Adrenal gland (tissue), 19 donors: ENCODE measurements at regions of chr17 and their contacts with region 1.

Region 1: GRCh38 chr17:3012926-3013581 is 50.4 kb downstream of the OR1D5 start:
- DNase-seq: peak; percentile 62 to 84 (median 74)
- H3K4me3 ChIP-seq: no peak overlapping the region
- H3K27ac ChIP-seq: no peak overlapping the region
- H3K4me1 ChIP-seq: no peaks in the 10 kb centered on the region
- H3K27me3 ChIP-seq: no peaks in the 10 kb centered on the region
- CTCF ChIP-seq: peak; percentile 58 to 93 (median 82)
- POLR2A ChIP-seq: no peak

Region 2: DNA sequence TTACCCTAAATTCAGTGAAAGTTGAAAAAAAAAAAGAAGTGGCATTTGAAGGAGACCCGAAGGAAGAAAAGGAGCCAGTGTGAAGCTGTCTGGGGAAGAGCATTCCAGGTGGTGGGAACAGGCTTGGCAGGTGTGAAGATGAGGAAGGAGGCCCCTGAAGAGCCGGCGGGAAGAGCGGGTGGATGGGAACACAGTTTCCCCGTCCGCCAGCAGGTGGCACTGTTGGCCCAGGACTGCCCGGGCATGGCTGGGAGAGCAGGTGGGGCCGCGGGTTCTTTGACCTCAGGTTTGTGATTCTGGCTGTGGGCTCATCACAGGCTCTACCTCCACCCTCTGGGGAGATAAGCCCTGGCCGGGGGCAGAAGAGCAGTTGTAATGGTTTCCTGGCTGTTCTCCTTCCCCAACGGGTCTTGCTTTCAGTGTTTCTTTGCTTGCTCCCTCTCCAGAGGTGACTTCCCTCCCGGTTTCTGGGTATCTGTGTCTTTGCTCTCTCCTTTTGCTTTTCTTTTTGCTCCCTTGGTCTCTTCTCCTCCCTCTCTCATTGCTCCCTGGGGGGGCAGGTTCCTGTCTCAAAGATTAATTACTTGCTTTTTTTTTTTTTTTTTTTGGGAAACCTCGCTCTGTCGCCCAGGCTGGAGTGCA is 184.5 kb before region 1 on chr17:
- intact Hi-C with region 1: loop called in 1 of 2 experiments (anchors 2 kb)
- DNase-seq: peak; percentile 64 to 82 (median 74)
- H3K4me3 ChIP-seq: no peak overlapping the region
- H3K27ac ChIP-seq: no peak overlapping the region
- H3K4me1 ChIP-seq: no peaks in the 10 kb centered on the region
- H3K27me3 ChIP-seq: no peaks in the 10 kb centered on the region
- CTCF ChIP-seq: peak; percentile 81 to 91 (median 90)
- POLR2A ChIP-seq: no peak

Region 3: DNA sequence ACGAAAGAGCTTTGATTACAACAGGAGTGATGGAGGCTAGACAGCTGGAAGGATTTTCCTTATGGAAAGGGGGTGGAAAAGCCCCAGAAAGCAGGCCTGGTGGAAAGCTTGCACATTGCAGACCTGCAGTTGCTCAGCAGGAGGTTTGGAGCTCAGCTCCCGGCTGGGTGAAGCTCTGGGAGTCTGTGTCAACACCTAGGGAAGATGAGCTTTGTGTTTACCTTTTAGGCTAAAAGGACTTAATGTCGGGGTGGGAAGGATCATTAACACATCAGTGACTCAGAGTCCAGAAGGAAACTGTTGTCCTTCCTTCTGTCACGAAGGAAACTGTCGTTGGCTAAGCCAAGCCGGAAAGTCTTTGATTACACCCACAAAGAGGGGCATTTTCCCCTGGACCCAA is 168.6 kb before region 1 on chr17:
- intact Hi-C with region 1: loop called in 1 of 2 experiments (anchors 10 kb)
- DNase-seq: no peak
- H3K4me3 ChIP-seq: no peak overlapping the region
- H3K27ac ChIP-seq: no peak overlapping the region
- H3K4me1 ChIP-seq: peaks cover 0 to 4% of the 10 kb centered on the region in 2 donors
- H3K27me3 ChIP-seq: peaks cover 13% of the 10 kb centered on the region
- CTCF ChIP-seq: no peak
- POLR2A ChIP-seq: no peak

Region 4: GRCh38 chr17:2853111-2853721 is 159.8 kb before region 1 on chr17:
- intact Hi-C with region 1: loop called (anchors 5 to 10 kb)
- DNase-seq: peak in 5 of 7 donors; percentile 15 to 62 (median 32)
- H3K4me3 ChIP-seq: peak overlapping the region in 2 of 4 donors; percentile 40 to 73
- H3K27ac ChIP-seq: peak overlapping the region in 2 of 5 donors; percentile 29 to 57
- H3K4me1 ChIP-seq: peaks cover 9 to 14% of the 10 kb centered on the region in 2 donors
- H3K27me3 ChIP-seq: peaks cover 35% of the 10 kb centered on the region
- CTCF ChIP-seq: no peak
- POLR2A ChIP-seq: no peak